ENCODE measurements at regions of chr6 and their contacts with region 1.

Region 1: GRCh38 chr6:117602151-117602898 is at the start of gene GOPC:
- DNase-seq: peak; percentile 95
- H3K4me3 Mint-ChIP-seq: peak within 1 kb of the TSS; percentile 97
- H3K27ac Mint-ChIP-seq: peak within 1 kb of the TSS; percentile 99
- H3K4me1 Mint-ChIP-seq: peaks cover 32% of the 10 kb centered on the region
- H3K27me3 Mint-ChIP-seq: no peaks in the 10 kb centered on the region
- total RNA-seq, gene GOPC: 22.9 and 24.2 TPM in 2 replicates

Region 2: GRCh38 chr6:117200067-117200466 is 402.3 kb before region 1 on chr6:
- intact Hi-C with region 1: no loop called
- DNase-seq: no peak
- H3K4me3 Mint-ChIP-seq: no peak overlapping the region
- H3K27ac Mint-ChIP-seq: no peak overlapping the region
- H3K4me1 Mint-ChIP-seq: no peaks in the 10 kb centered on the region
- H3K27me3 Mint-ChIP-seq: no peaks in the 10 kb centered on the region

Region 3: DNA sequence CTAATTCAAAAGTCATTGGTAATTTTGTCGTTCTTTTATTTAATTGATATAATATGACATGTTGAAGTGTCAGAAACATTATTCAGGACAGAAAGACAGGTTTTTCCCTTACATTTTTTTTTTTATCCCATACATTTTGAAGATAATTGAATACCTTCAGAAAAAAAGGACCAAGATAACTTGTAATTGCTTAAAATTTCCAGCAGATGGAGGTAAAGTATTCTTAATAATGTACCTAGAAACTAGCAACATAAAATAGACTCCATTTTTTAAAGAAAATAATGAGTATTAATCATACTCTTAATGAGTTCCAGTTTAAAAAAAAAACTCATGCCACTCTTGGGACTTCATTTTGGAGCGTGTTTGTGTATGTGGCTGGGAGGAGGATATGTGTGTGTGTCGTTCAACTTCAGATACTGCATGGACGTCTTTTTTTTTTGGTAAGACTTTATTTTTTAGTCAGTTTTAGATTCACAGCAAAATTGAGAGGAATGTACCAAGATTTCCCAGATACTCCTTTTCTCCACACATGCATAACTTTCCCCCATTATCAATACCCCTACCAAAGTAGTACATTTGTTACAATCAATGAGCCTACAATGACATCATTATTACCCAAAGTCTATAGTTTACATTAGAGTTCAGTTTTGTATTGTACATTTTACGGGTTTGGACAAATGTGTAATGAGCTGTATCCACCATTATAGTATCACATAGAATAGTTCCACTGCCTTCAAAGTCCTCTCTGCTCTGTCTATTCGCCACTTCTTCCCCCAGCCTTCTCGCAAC is 256.0 kb before region 1 on chr6:
- intact Hi-C with region 1: loop called (anchors 2 kb)
- DNase-seq: no peak
- H3K4me3 Mint-ChIP-seq: no peak overlapping the region
- H3K27ac Mint-ChIP-seq: no peak overlapping the region
- H3K4me1 Mint-ChIP-seq: no peaks in the 10 kb centered on the region
- H3K27me3 Mint-ChIP-seq: peaks cover 7% of the 10 kb centered on the region

Region 4: DNA sequence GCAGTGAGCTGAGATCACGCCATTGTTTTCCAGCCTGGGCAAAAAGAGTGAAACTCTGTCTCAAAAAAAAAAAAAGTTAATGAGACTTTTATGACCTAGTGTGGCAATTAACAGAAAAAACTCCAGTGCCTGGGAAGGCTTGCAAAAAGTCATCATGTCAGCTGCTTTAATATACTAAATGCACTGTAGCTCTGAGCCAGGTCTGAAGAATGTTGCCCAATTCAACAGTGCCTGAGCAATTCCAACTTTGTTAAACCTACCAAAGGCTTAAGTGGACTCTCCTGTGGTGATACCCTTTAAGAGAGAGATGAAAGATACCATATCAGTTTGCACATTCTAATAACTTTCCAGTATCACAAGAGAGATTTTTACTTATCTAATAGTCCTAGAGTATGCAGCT is 170.1 kb before region 1 on chr6:
- intact Hi-C with region 1: no loop called
- DNase-seq: no peak
- H3K4me3 Mint-ChIP-seq: no peak overlapping the region
- H3K27ac Mint-ChIP-seq: no peak overlapping the region
- H3K4me1 Mint-ChIP-seq: no peaks in the 10 kb centered on the region
- H3K27me3 Mint-ChIP-seq: peaks cover 39% of the 10 kb centered on the region

Region 5: DNA sequence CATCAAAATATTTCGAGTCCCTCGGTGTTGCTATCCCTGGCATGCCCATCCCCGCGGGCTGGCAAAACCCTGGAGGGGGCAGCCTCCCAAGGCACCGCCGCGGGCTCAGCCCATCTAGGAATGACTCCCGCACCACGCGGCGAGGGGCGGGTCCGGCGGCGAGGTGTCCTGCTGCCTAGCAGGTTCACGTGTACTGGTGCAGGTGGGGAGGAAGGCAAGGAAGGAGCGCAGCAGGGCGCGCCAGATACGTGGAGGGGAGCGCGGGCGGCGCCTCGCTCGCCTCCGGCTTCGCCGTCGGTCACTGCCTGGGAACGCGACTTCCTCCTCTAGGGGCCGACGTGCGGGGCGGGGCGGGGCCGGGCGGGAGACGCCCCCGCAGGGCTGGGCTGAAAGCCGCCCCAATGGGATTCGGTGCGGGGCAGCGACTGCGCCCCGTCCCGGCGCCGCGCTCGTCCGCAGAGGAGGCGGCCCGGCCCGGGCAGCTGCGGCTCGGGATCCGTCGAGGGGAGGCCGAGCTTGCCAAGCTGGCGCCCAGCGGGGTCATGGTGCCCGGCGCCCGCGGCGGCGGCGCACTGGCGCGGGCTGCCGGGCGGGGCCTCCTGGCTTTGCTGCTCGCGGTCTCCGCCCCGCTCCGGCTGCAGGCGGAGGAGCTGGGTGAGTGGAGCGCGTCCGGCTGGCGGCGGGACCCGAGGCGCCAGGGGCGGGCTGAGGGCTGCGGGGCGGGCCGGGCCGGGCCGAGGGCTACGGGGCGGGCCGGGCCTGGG is 119.9 kb before region 1 on chr6 and contains the start of gene DCBLD1:
- intact Hi-C with region 1: loop called (anchors 1 kb)
- DNase-seq: peak; percentile 56
- H3K4me3 Mint-ChIP-seq: peak within 1 kb of the TSS; percentile 86
- H3K27ac Mint-ChIP-seq: peak within 1 kb of the TSS; percentile 72
- H3K4me1 Mint-ChIP-seq: peaks cover 14% of the 10 kb centered on the region
- H3K27me3 Mint-ChIP-seq: peaks cover 47% of the 10 kb centered on the region
- total RNA-seq, gene DCBLD1: 4.0 and 7.5 TPM in 2 replicates

Region 6: DNA sequence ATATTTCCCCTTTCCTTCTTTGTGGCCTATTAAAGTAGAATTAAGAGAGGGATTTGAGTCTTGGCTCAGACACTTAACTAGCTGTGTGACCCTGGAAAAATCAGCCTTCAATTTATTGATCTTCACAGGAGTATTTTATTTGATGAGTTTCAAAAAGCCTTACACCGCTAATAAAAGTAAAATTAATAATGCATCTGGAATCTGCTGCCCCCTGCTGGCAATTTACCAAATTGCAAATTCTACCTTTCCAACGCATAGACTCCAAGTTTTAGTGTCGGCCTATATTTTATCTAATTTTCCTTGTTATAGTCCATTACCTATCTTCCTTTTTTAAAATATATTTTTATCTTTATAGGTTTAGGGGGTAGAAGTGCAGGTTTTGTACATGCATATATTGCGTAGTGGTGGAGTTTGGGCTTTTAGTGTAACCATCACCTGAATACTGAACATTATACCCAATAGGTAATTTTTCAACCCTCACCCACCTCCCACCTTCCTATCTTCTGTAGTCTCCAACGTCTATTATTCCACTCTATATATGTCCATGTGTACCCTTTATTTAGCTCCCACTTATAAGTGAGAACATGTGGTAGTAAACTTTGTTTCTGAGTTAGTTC is 46.3 kb before region 1 on chr6:
- intact Hi-C with region 1: loop called (anchors 2 kb)
- DNase-seq: peak; percentile 27
- H3K4me3 Mint-ChIP-seq: no peak overlapping the region
- H3K27ac Mint-ChIP-seq: no peak overlapping the region
- H3K4me1 Mint-ChIP-seq: peaks cover 4% of the 10 kb centered on the region
- H3K27me3 Mint-ChIP-seq: peaks cover 2% of the 10 kb centered on the region

Region 7: DNA sequence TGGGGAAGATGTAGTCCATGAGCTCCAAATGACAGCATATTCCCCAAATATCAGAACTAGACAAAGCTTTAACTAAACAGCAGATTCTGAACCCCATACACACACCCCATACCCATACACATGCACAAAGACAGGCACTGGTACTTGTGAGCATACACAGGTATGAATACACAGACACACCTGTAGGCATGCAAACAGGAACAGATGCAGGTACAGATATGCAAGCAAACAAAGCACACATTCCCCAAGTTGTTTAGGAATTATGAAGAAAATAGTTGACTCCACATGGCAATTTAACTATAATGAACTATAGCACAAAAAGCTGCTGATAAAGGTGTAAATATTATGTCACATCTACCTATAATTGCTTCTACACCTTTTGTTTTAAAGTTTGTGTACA is 16.7 kb before region 1 on chr6:
- intact Hi-C with region 1: no loop called
- DNase-seq: no peak
- H3K4me3 Mint-ChIP-seq: no peak overlapping the region
- H3K27ac Mint-ChIP-seq: no peak overlapping the region
- H3K4me1 Mint-ChIP-seq: peaks cover 4% of the 10 kb centered on the region
- H3K27me3 Mint-ChIP-seq: no peaks in the 10 kb centered on the region

Region 8: DNA sequence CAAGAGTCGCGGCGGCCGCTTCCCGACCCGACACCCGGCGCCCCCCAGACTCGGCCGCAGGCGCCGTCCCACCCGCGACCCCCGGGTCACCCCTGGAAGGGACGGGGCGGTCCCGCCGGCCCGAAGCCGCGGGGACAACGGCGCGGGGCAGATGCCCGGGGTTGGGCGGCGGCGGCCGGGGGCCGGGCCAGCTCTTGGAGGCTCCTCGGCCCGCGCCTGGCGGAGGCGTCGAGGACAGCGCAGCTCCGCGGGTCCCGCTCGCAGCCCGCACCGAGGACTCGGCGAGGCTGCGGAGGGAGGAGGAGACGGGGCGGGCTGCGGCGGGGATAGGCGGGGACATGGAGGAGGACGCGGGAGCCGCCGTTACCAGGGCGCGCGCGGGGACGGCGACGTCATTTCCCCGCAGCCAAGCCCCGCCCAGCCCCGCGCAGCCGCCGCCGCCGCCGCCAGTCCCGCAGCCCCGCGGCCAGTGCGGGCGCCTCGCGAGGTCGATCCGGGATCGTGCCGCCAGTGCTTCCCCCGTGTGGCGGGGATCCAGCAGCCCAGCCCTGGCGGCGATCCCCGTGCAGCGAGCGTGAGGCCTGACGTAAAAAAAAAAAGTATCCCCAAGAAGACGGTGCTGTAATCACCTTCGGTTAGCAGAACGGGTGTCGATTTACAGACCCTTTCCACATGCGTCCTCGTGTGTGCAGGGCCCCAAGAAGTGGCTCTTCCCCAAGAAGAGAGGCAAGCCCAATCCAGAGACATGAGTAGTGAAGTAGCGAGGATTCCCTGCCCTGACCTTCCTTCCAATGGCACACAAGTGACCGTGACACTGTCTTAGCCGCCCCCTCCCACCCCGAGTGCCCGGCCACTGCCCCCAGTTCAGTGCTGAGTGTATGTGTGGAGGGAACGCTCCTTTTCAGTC is 1476.3 kb after region 1 on chr6 and contains the start of gene FAM184A:
- intact Hi-C with region 1: loop called (anchors 5 kb)
- DNase-seq: peak; percentile 67
- H3K4me3 Mint-ChIP-seq: peak within 1 kb of the TSS; percentile 89
- H3K27ac Mint-ChIP-seq: peak within 1 kb of the TSS; percentile 69
- H3K4me1 Mint-ChIP-seq: peaks cover 28% of the 10 kb centered on the region
- H3K27me3 Mint-ChIP-seq: peaks cover 8% of the 10 kb centered on the region
- total RNA-seq, gene FAM184A: 2.6 and 2.9 TPM in 2 replicates

Measured in activated T-helper 2 cell treated with anti-CD3 and anti-CD28 coated beads, Interferon-gamma antibody, Interleukin-2, Interleukin-4, amounts not matched to agents 10 μg/mL and 5 μg/mL and 100 μg/mL, durations not matched to agents 14 hours and 24 hours and 36 hours (primary cell).